Panc1 (cell line): ENCODE measurements at regions of chr19 and their contacts with region 1.

Region 1: GRCh38 chr19:12656899-12657571 is 9.5 kb downstream of the MAN2B1 start:
- DNase-seq: no peak
- ATAC-seq: peak; percentile 51
- H3K4me3 ChIP-seq: no peak overlapping the region
- H3K27ac ChIP-seq: no peak overlapping the region
- H3K4me1 ChIP-seq: no peaks in the 10 kb centered on the region
- H3K27me3 ChIP-seq: no peaks in the 10 kb centered on the region
- CTCF ChIP-seq: no peak

Region 2: DNA sequence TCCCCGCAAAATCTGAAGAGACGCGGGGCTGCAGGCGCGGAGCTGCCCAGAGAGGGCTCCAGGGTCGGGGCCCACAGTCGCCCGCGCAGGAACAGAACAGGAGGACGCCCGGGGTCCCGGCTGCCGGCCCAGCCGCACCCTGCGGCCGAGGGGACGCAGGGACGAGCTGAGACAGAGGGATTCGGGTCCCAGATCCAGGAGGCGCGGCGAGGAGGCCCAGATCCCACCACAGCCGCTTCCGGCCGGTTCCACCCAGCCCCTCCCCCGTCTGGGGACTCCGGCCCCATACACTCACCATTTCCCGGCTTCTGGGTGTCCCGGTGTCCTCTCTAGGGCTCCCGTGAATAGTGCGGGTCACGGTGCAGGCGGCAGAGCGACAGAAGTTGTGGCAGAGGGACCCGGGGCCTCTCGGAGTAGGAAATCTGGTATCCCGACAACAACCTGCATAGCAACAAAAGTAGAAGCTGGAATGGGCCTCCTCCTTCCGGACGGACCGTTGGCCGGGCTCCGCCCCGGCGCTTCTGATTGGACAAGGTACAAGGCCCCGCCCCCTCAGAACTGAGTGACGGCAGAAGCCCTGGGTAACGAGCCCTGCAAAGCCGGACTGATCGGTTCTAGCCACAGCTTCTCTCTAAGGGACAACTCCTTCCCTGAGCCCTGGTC is 517.0 kb before region 1 on chr19 and contains the start of gene ZNF20:
- CTCF ChIA-PET with region 1: no interaction called
- POLR2A ChIA-PET with region 1: no interaction called
- in situ Hi-C with region 1: no loop called
- intact Hi-C with region 1: no loop called
- DNase-seq: no peak
- ATAC-seq: peak; percentile 98
- H3K4me3 ChIP-seq: peak within 1 kb of the TSS; percentile 75 to 79
- H3K27ac ChIP-seq: peak within 1 kb of the TSS; percentile 84
- H3K4me1 ChIP-seq: peaks cover 5% of the 10 kb centered on the region; the same call in 1 of the 2 replicates
- H3K27me3 ChIP-seq: no peaks in the 10 kb centered on the region
- CTCF ChIP-seq: no peak
- total RNA-seq, gene ZNF20: 4.9 TPM

Region 3: GRCh38 chr19:12628040-12629022 is 28.7 kb before region 1 on chr19:
- CTCF ChIA-PET with region 1: no interaction called
- POLR2A ChIA-PET with region 1: interaction called, 12 read pairs
- in situ Hi-C with region 1: no loop called
- intact Hi-C with region 1: no loop called
- DNase-seq: no peak
- ATAC-seq: no peak
- H3K4me3 ChIP-seq: no peak overlapping the region
- H3K27ac ChIP-seq: no peak overlapping the region
- H3K4me1 ChIP-seq: no peaks in the 10 kb centered on the region
- H3K27me3 ChIP-seq: no peaks in the 10 kb centered on the region
- CTCF ChIP-seq: no peak

Region 4: GRCh38 chr19:12782229-12783028 is 125.4 kb after region 1 on chr19:
- CTCF ChIA-PET with region 1: no interaction called
- POLR2A ChIA-PET with region 1: no interaction called
- in situ Hi-C with region 1: no loop called
- intact Hi-C with region 1: no loop called
- DNase-seq: no peak
- ATAC-seq: peak; percentile 54
- H3K4me3 ChIP-seq: peak overlapping the region; percentile 45 to 47
- H3K27ac ChIP-seq: peak overlapping the region; percentile 77
- H3K4me1 ChIP-seq: peaks cover 49% of the 10 kb centered on the region
- H3K27me3 ChIP-seq: no peaks in the 10 kb centered on the region
- CTCF ChIP-seq: no peak

Region 5: GRCh38 chr19:12913011-12913561 is 256.1 kb after region 1 on chr19:
- CTCF ChIA-PET with region 1: no interaction called
- POLR2A ChIA-PET with region 1: no interaction called
- in situ Hi-C with region 1: no loop called
- intact Hi-C with region 1: no loop called
- DNase-seq: no peak
- ATAC-seq: no peak
- H3K4me3 ChIP-seq: no peak overlapping the region
- H3K27ac ChIP-seq: no peak overlapping the region
- H3K4me1 ChIP-seq: no peaks in the 10 kb centered on the region
- H3K27me3 ChIP-seq: no peaks in the 10 kb centered on the region
- CTCF ChIP-seq: no peak